Lower leg skin (tissue), 4 donors: ENCODE measurements at regions of chr16 and their contacts with region 1.

Region 1: DNA sequence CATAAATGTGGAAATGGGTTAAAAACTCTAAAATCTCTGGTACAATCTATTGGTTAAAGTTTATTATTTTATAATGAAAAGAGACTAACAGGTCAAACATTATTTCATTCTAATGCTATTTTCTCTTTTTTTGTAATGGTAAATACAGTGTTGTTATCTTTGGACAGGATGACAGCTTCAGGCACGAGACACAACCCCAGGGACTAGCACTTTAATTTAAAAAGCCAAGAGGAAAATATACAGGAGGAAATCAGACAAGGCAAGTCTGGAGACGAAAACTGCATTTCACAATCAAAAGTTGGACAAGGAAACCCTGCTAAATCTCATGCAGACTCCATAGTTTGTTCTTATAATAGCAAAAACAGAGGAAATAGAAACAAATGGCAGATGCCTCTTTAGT is 589.1 kb upstream of the CDH8 start:
- DNase-seq: no peak
- H3K4me3 ChIP-seq: no peak overlapping the region
- CTCF ChIP-seq: no peak
- POLR2A ChIP-seq: no peak

Region 2: GRCh38 chr16:62562121-62562520 is 63.2 kb before region 1 on chr16:
- intact Hi-C with region 1: loop called (anchors 2 kb)
- DNase-seq: no peak
- H3K4me3 ChIP-seq: no peak overlapping the region
- CTCF ChIP-seq: no peak
- POLR2A ChIP-seq: no peak

Region 3: DNA sequence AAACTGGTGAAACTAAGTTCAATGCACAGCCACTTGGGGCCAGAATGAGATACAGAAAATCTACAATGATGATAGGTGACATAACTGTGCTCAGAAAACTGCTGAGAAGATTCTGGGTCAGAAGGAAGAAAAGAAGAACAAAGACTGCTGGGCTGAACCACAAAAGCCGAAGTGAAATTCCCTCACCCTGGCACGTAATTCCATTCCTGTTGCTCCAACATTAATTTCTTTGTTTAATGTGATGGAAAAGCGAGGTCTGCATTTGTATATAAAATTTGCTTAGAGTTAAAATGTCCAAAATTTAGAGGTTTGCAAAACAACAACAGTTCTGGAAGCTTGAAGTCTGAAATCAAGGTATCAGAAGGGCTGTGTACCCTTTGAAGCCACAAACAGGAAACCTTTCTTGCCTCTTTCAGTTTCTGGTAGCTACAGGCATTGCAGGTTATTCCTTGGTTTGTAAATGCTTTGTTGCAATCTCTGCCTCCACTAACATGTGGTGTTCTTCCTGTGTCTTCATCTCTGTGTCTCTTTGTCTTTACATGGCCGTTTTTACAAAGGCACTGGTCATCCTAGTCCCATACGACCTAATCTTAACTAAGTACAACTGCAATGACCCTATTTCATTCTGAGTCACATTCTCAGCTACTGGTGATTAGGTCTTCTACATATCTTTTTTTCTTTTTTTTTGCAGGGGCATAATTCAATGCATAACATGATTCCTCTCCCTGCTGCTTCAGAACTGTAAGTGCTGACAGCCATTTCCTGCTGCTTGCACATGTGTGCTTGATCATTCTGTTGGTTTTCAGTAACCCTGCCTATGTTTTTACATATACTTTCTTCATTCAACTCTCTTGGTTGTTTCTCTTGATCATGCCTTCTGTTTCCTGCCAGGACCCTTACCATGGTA is 13.9 kb after region 1 on chr16:
- intact Hi-C with region 1: no loop called
- DNase-seq: no peak
- H3K4me3 ChIP-seq: no peak overlapping the region
- CTCF ChIP-seq: no peak
- POLR2A ChIP-seq: no peak